GM18951 (cell line): ENCODE measurements at regions of chr19 and their contacts with region 1.

Region 1: GRCh38 chr19:1540365-1540925 is 16.6 kb downstream of the PLK5 start:
- POLR2A ChIP-seq: no peak

Region 2: GRCh38 chr19:1774999-1775772 is 234.7 kb after region 1 on chr19:
- in situ Hi-C with region 1: loop called (anchors 25 kb)
- POLR2A ChIP-seq: no peak